Breast epithelium (tissue), 4 donors: ENCODE measurements at regions of chr15 and their contacts with region 1.

Region 1: GRCh38 chr15:29074045-29074444 is 188.3 kb downstream of the APBA2 start:
- DNase-seq: no peak
- H3K4me3 ChIP-seq: no peak overlapping the region
- H3K27ac ChIP-seq: no peak overlapping the region
- H3K4me1 ChIP-seq: no peaks in the 10 kb centered on the region
- H3K27me3 ChIP-seq: no peaks in the 10 kb centered on the region
- CTCF ChIP-seq: no peak
- POLR2A ChIP-seq: no peak

Region 2: DNA sequence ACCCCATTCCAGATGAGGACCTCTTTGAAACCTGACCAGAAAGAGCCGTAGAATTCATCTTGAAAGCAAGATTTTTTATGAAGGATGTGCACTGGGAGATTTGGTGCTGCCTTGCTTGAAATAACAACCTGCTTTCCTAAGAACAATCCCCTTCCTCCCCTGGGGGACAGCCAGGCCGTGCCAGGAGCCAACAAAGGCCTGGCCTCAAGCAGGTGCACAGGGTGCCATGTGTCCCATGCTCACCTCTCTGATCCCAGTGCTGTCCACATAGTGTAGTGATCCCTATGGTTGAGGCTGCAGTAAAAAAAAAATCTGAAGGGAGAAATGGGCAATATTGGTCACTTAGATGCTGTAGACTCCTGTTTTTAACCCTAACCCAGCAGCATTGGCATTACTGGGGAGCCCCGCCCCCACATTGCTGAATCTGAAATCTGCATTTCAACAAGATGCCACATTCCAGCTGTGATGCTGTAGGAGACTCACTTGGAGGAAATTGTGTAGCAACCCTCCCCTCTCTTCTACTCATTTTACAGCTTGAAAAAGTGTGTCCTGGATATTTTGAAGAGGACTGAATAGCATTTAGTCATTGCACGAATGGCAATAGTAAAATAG is 17.1 kb before region 1 on chr15:
- intact Hi-C with region 1: no loop called
- DNase-seq: no peak
- H3K4me3 ChIP-seq: no peak overlapping the region
- H3K27ac ChIP-seq: no peak overlapping the region
- H3K4me1 ChIP-seq: no peaks in the 10 kb centered on the region
- H3K27me3 ChIP-seq: no peaks in the 10 kb centered on the region
- CTCF ChIP-seq: no peak
- POLR2A ChIP-seq: no peak

Region 3: DNA sequence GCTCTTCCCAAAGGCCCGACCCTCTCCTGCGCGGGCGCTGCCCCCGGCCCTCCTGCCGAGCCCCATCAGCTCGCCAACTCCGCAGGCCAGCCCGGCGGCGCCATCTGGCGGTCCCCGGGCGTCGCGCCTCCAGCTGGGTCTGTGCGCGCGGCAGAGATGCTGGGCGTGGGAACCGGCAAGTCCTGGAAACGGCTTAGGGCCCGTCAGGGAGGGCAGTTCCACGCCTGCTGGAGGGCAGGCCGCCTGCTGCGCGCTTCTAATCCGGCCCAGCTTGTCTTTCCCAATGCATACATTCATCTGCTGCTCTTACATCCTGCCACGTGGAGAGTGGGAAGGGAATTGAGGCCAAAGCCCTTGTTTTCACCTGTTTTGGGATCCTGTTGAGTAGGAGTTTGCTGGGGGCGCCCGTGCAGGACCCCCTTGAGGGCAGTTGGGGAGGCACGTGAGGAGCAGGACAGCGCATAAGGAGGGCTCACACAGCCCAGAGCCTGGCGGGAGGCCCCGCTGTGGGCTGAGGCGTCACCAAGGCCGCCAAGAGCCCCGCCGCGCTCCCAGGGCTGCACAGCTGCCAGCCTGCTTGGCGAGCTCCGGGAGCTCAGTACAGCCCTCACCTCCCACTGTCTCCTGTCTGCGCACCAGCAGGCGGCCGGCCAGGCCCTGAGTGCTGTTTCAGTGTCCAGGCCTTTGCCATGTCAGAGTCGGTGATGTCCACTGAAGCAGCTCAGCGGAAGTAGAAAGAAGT is 29.9 kb after region 1 on chr15:
- intact Hi-C with region 1: loop called (anchors 2 kb)
- DNase-seq: peak in 1 of 2 donors; percentile 36
- H3K4me3 ChIP-seq: peak overlapping the region; percentile 28 to 70 (median 48)
- H3K27ac ChIP-seq: peak overlapping the region in 1 of 2 donors; percentile 69
- H3K4me1 ChIP-seq: no peaks in the 10 kb centered on the region
- H3K27me3 ChIP-seq: peaks cover 0 to 3% of the 10 kb centered on the region in 2 donors
- CTCF ChIP-seq: peak; percentile 12 to 42 (median 40)
- POLR2A ChIP-seq: no peak

Region 4: GRCh38 chr15:29124581-29125381 is 50.7 kb after region 1 on chr15:
- intact Hi-C with region 1: loop called (anchors 1 kb)
- DNase-seq: no peak
- H3K4me3 ChIP-seq: no peak overlapping the region
- H3K27ac ChIP-seq: no peak overlapping the region
- H3K4me1 ChIP-seq: no peaks in the 10 kb centered on the region
- H3K27me3 ChIP-seq: peaks cover 0 to 5% of the 10 kb centered on the region in 2 donors
- CTCF ChIP-seq: no peak
- POLR2A ChIP-seq: no peak